Endothelial cell of umbilical vein (primary cell): ENCODE measurements at regions of chr12 and their contacts with region 1.

Region 1: GRCh38 chr12:57782608-57783465 is at the start of gene TSFM:
- DNase-seq: peak; percentile 93
- H3K4me3 ChIP-seq: peak within 1 kb of the TSS; percentile 40 to 63 (median 52)
- H3K27ac ChIP-seq: peak within 1 kb of the TSS; percentile 1
- H3K4me1 ChIP-seq: peaks cover 7% of the 10 kb centered on the region
- H3K27me3 ChIP-seq: no peaks in the 10 kb centered on the region
- CTCF ChIP-seq: peak; percentile 91
- POLR2A ChIP-seq: peak; percentile 82
- total RNA-seq, gene TSFM: 39.3 and 41.8 TPM in 2 replicates

Region 2: GRCh38 chr12:57520053-57520871 is 262.6 kb before region 1 on chr12 and contains the start of gene DDIT3:
- CTCF ChIA-PET with region 1: no interaction called
- POLR2A ChIA-PET with region 1: no interaction called
- dilution Hi-C with region 1: no loop called
- intact Hi-C with region 1: no loop called
- DNase-seq: peak; percentile 99
- H3K4me3 ChIP-seq: peak within 1 kb of the TSS; percentile 7 to 89 (median 67)
- H3K27ac ChIP-seq: peak within 1 kb of the TSS; percentile 83
- H3K4me1 ChIP-seq: peaks cover 48% of the 10 kb centered on the region
- H3K27me3 ChIP-seq: no peaks in the 10 kb centered on the region
- CTCF ChIP-seq: no peak
- POLR2A ChIP-seq: peak; percentile 100
- total RNA-seq, gene DDIT3: 9.8 and 13.7 TPM in 2 replicates

Region 3: DNA sequence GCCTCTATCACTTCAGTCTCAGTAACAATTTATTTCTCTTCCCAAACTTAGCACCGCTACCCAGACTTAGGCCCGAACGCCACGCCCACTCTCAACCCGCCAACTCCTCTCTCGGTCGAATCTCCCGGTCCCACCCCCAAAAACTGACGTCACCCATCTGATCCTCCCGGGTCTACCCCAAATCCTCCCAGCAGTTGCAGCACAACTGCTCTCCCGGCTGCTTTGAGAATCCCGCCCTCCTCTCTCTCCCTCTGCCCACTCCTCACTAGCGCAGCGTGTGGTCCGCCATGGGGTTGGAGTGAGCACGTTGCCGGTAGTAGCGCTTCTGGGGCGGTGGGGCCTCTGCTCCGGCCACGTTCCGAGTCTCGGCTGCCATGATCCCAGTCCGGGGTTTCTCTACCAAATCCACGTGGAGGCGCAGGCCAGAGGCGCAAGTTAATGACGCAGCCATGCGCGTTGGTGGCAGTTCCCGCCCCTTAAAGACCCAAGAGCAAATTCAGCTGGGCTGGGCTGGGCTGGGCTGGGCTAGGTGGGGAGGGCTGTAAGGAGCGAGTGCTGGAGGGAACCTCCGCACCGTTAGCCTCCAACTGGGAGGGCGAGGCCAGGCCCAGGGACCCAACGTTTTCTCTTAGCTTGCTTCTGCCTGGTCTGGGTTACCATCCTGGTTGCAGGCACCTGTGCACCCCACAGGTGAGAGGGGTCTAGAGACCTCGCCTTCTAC is 11.0 kb before region 1 on chr12 and contains the start of gene METTL1:
- CTCF ChIA-PET with region 1: interaction called, 15 read pairs
- POLR2A ChIA-PET with region 1: interaction called, 4 read pairs
- dilution Hi-C with region 1: no loop called
- intact Hi-C with region 1: loop called (anchors 1 kb)
- DNase-seq: peak; percentile 98
- H3K4me3 ChIP-seq: peak within 1 kb of the TSS; percentile 69 to 79 (median 76)
- H3K27ac ChIP-seq: peak within 1 kb of the TSS; percentile 79
- H3K4me1 ChIP-seq: peaks cover 13% of the 10 kb centered on the region
- H3K27me3 ChIP-seq: peaks cover under 1 to 5% of the 10 kb centered on the region in 2 experiments
- CTCF ChIP-seq: no peak
- POLR2A ChIP-seq: peak; percentile 75
- total RNA-seq, gene METTL1: 24.3 and 24.8 TPM in 2 replicates

Region 4: DNA sequence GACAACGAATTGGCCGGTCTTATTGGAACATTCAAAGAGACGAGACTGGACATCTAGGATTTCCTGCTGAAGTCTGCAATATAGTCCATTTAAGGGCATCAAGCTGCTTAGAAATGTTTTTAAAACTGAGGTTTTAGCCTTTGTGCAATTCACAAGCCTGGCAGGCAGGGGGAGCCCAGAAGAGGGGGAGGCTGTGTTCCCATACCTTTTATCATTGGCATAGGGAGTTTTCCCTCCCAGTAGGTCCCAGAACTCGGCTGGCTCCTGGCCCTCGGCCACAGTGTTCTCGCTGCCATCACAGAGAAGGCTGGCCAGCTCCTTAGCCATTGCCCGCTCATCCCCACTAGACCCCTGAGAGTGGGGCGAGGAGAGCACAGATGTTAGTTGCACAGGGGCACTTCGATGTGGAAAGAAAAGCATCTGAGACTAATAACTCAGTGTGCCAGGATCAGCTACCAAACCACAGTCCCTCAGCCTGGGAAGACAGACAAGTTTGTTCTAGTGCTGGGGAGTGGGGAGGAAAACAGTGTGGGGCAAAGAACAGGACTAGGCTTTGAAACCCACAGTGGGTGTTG is 20.6 kb after region 1 on chr12:
- CTCF ChIA-PET with region 1: interaction called, 10 read pairs
- POLR2A ChIA-PET with region 1: no interaction called
- dilution Hi-C with region 1: no loop called
- intact Hi-C with region 1: no loop called
- DNase-seq: peak; percentile 60
- H3K4me3 ChIP-seq: no peak overlapping the region
- H3K27ac ChIP-seq: no peak overlapping the region
- H3K4me1 ChIP-seq: no peaks in the 10 kb centered on the region
- H3K27me3 ChIP-seq: no peaks in the 10 kb centered on the region
- CTCF ChIP-seq: peak; percentile 81 to 83
- POLR2A ChIP-seq: no peak

Region 5: GRCh38 chr12:57899010-57899662 is 116.3 kb after region 1 on chr12:
- CTCF ChIA-PET with region 1: interaction called, 15 read pairs
- POLR2A ChIA-PET with region 1: no interaction called
- dilution Hi-C with region 1: no loop called
- intact Hi-C with region 1: no loop called
- DNase-seq: peak; percentile 59
- H3K4me3 ChIP-seq: no peak overlapping the region
- H3K27ac ChIP-seq: no peak overlapping the region
- H3K4me1 ChIP-seq: peaks cover 28% of the 10 kb centered on the region
- H3K27me3 ChIP-seq: no peaks in the 10 kb centered on the region
- CTCF ChIP-seq: no peak
- POLR2A ChIP-seq: no peak